Gastrocnemius medialis (tissue), 4 donors: ENCODE measurements at regions of chr22 and their contacts with region 1.

Region 1: DNA sequence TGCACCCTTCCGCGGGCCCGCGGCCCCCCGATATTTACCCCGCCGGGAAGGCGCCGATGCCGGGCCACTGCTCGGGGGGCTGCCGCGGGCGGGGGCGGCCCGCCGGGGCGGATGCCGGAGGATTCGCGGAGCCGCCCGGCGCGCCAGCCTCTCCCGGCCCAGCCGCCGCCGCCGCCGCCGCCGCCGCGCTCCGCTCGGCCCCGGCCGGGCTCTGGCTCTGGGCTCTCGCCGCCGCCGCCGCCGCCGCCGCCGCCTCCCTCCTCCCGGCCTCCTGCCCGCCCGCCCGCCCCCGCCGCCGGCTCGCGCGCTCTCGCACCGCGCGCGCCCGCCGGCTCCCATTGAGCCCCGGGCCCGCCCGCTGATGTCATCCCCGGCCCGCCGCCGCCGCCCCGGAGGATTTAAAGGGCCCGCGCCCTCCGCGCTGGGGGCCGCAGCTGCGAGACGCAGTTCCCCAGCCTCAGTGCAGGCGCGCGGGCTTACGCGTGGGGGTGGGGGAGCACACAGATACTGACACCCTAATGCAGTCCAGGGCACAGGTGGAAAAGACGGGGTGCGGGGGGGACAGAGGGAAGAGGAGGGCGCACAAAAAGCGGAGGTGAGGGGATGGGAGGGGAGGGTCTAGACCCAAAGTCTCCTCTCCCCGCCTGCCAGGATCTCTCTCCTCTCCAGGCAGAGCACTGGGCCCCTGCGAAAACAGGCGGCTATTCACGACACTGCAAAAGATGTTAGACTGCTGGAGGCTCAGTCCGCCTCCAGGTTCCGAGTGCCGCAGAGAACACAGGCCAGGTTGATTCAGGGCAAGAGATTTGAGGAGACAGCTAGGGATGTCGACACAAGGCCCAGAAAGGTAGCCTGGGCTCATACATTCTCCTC is at the start of gene CSNK1E:
- DNase-seq: peak; percentile 62 to 79
- ATAC-seq: peak; percentile 58 to 67
- H3K4me3 ChIP-seq: peak within 1 kb of the TSS; percentile 64 to 88 (median 78)
- H3K27ac ChIP-seq: peak within 1 kb of the TSS; percentile 95 to 100 (median 98)
- H3K4me1 ChIP-seq: peaks cover 38 to 46% of the 10 kb centered on the region in 2 donors
- H3K27me3 ChIP-seq: no peaks in the 10 kb centered on the region
- CTCF ChIP-seq: no peak
- POLR2A ChIP-seq: peak; percentile 28 to 60
- total RNA-seq, gene CSNK1E: 29.8 to 66.3 (median 40.3) TPM

Region 2: GRCh38 chr22:38272373-38273134 is 44.8 kb before region 1 on chr22 and contains the start of gene TMEM184B:
- in situ Hi-C with region 1: no loop called
- intact Hi-C with region 1: loop called (anchors 2 kb)
- DNase-seq: peak; percentile 33 to 72
- ATAC-seq: peak; percentile 91 to 94
- H3K4me3 ChIP-seq: peak within 1 kb of the TSS; percentile 75 to 99 (median 86)
- H3K27ac ChIP-seq: peak within 1 kb of the TSS; percentile 91 to 96 (median 96)
- H3K4me1 ChIP-seq: peaks cover 57 to 59% of the 10 kb centered on the region in 2 donors
- H3K27me3 ChIP-seq: no peaks in the 10 kb centered on the region
- CTCF ChIP-seq: no peak
- POLR2A ChIP-seq: peak; percentile 98 to 99
- total RNA-seq, gene TMEM184B: 25.4 to 40.7 (median 31.2) TPM

Region 3: GRCh38 chr22:38284042-38284402 is 33.3 kb before region 1 on chr22:
- in situ Hi-C with region 1: no loop called
- intact Hi-C with region 1: no loop called
- DNase-seq: peak in 1 of 2 donors; percentile 55
- ATAC-seq: peak; percentile 72 to 84
- H3K4me3 ChIP-seq: no peak overlapping the region
- H3K27ac ChIP-seq: peak overlapping the region; percentile 61 to 74 (median 66)
- H3K4me1 ChIP-seq: peaks cover 6 to 9% of the 10 kb centered on the region in 2 donors
- H3K27me3 ChIP-seq: no peaks in the 10 kb centered on the region
- CTCF ChIP-seq: no peak
- POLR2A ChIP-seq: no peak

Region 4: DNA sequence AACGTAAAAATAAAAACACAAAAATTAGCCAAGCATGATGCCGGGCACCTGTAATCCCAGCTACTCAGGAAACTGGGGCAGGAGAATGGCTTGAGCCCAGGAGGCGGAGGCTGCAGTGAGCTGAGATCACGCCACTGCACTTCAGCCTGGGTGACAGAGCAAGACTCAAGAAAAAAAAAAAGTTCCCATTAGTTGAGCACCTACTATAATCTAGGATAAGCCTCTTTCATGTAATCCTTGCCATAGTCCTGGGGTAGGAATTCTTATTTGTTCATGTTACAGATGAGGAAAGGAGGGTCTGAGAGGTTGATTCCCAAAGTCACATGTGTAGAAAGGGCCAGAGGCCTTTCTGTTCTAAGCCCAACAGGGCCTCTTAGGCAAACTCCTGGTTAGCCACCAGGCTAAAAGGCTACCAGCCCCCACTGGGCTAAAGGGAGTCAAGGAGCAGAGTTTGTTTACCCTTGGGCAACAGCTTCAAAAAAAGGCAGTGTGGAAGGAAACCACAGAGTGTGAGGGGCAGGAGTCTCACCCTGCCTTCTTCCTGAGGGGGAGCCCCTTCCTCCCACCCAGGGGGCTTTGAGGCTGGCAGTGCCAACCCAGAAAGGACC is 21.5 kb after region 1 on chr22:
- in situ Hi-C with region 1: no loop called
- intact Hi-C with region 1: no loop called
- DNase-seq: no peak
- ATAC-seq: no peak
- H3K4me3 ChIP-seq: no peak overlapping the region
- H3K27ac ChIP-seq: no peak overlapping the region
- H3K4me1 ChIP-seq: peaks cover 0 to 7% of the 10 kb centered on the region in 2 donors
- H3K27me3 ChIP-seq: peaks cover 0 to 16% (median 11%) of the 10 kb centered on the region in 3 donors
- CTCF ChIP-seq: no peak
- POLR2A ChIP-seq: no peak

Region 5: DNA sequence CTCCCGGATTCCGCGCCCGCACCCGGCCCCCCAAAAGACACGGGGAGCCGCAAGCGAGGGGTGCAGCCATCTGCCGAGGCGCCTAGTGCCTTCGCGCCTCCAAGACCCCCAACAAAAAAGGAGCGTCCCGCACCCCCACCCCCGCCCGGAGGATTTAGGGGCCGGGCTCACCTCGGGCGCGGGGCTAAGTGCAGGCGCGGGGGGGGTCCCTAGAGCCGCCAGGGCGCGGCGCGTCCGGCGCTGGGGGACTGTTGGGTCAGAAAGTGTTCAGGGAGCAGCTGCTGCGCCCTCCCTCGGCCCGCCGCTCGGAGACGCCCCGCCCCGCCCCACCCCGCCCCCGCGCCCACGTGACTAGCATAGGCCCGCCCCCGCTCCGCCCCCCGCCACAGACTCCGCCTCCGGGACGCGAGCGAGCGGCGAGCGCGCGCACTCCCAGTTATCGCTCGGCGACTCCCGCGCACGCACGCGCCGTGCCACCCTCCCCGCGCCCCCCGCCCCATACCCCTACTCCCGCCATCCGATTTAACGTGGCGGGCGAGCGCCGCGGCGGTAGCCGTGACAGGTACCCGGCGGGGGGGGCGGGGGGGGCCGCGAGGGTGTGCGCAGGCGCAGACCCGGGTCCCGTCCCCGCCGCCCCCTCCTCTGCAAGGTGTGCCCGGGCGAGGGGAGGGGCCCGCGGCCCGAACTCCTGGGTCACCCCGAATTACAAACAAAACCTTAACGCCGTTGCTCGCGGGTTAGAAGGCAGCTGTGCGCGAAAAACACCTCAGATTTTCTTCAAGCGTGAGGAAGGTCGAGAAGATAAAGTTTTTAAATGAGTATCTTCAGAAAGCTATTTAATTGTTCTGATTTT is 81.5 kb after region 1 on chr22:
- in situ Hi-C with region 1: no loop called
- intact Hi-C with region 1: loop called (anchors 2 kb)
- DNase-seq: peak; percentile 74 to 77
- ATAC-seq: peak; percentile 80 to 85
- H3K4me3 ChIP-seq: peak overlapping the region; percentile 74 to 99 (median 90)
- H3K27ac ChIP-seq: peak overlapping the region; percentile 88 to 99 (median 98)
- H3K4me1 ChIP-seq: peaks cover 10 to 18% of the 10 kb centered on the region in 2 donors
- H3K27me3 ChIP-seq: no peaks in the 10 kb centered on the region
- CTCF ChIP-seq: no peak
- POLR2A ChIP-seq: peak; percentile 88 to 89

Region 6: DNA sequence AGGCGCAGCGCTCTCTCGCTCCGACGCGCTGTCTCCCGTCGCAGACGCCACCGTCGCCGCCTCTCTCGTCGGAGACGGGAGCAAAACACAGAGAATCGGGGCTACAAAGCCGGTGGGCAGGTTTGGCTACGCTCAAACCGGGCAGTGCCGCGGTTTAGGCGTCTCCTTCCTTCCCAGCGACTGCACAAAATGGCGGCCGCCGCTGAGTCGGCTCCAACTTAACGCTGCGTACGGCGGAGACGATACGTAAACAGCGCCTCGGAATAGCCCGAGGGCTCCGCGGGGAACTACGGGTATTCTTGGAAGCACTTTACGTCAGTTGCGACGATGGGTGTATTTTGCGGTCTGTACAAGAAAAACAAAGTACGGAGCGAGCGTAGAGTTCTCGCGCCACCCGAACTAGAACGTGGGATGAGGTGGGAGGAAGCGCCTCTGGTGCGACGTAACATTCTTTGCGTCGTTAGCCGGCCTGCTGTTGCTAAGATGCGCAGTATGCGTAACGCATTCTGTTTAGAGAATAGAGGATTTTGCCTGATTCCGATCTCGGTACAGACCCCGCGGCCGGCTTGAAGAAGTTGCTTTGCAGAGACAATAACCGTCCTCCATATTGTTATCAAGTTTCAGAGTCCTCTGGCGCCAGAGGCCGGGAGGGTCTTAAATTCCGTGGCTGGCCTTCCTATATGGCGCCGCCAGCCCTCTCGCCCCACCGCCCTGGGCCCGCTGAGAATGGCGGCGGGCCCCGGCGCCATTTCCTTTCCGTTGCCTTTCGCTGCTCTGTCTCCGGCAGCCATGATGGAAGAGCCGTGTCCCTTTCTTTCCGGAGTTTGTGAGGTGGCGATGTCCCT is 189.0 kb after region 1 on chr22 and contains the start of gene DDX17:
- in situ Hi-C with region 1: no loop called
- intact Hi-C with region 1: loop called (anchors 5 kb)
- DNase-seq: peak; percentile 91 to 94
- ATAC-seq: peak; percentile 91 to 92
- H3K4me3 ChIP-seq: peak within 1 kb of the TSS; percentile 72 to 95 (median 85)
- H3K27ac ChIP-seq: peak within 1 kb of the TSS; percentile 94 to 100 (median 98)
- H3K4me1 ChIP-seq: peaks cover 34 to 36% of the 10 kb centered on the region in 2 donors
- H3K27me3 ChIP-seq: no peaks in the 10 kb centered on the region
- CTCF ChIP-seq: no peak
- POLR2A ChIP-seq: peak; percentile 53 to 84
- total RNA-seq, gene DDX17: 108 to 329 (median 206) TPM